Psoas muscle (tissue), 8 donors: ENCODE measurements at regions of chr1 and their contacts with region 1.

Region 1: DNA sequence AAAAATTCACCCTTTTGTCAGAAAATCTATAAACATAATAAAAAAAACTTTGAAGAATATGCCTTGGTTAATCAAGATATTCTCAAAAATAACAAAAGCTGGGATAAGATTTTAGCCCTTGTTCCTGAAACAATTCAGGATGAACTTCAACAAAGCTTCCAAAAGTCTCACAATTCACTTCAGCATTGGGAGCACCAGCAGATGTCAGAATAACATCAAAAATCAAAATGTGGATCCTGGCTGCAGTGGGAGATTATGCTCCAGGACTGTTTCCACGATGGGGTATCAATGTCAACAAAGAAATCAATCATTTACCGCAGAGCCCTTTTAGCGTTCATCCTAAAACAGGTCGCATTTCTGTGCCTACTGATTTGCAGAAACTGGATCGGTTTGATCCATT is 35.2 kb downstream of the ZNF670 start:
- DNase-seq: no peak
- ATAC-seq: no peak
- H3K4me3 ChIP-seq: no peak overlapping the region
- H3K27ac ChIP-seq: no peak overlapping the region
- H3K4me1 ChIP-seq: no peaks in the 10 kb centered on the region
- H3K27me3 ChIP-seq: no peaks in the 10 kb centered on the region
- CTCF ChIP-seq: peak; percentile 40

Region 2: GRCh38 chr1:247373721-247374141 is 330.3 kb after region 1 on chr1:
- intact Hi-C with region 1: loop called in 1 of 2 experiments (anchors 10 kb)
- DNase-seq: peak; percentile 41 to 58
- ATAC-seq: peak in 2 of 4 donors; percentile 30 to 69
- H3K4me3 ChIP-seq: peak overlapping the region; percentile 54
- H3K27ac ChIP-seq: no peak overlapping the region
- H3K4me1 ChIP-seq: no peaks in the 10 kb centered on the region
- H3K27me3 ChIP-seq: peaks cover 0 to 16% (median 5%) of the 10 kb centered on the region in 3 donors
- CTCF ChIP-seq: peak; percentile 41